Activated CD4-positive, alpha-beta memory T cell treated with anti-CD3 and anti-CD28 coated beads for 36 hours (primary cell): ENCODE measurements at regions of chr2 and their contacts with region 1.

Region 1: DNA sequence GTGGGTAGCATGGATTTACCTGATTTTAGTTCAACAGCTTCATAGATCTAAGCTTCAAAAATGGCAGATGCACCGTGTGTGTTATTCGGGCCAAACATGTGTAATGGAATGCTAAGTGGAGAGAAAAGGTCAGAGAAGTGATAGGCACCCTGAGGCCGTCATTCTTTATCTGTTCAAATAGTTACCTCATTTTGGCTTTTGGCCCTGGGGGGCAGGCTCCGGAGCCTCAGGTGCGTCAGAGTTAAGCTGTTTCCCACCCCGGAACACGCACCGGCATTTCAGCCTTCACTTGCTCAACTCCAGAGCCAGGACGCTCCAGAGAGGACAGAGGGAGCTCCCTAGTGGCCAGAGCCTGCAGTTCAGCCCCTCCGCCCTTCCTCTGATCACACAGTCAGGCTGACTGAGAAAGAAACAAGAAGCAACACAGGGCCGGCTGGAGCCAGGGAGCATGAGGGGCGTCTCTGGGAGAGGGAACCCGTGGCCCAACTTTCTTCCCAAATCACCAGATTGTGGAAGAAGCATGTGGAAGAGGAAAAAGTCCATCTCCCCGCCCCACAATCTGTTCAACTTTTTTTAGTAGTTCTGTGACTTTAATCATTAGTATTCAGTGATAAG is 135.2 kb upstream of the EPC2 start:
- DNase-seq: peak; percentile 95
- H3K4me3 Mint-ChIP-seq: peak overlapping the region; percentile 66
- H3K27ac Mint-ChIP-seq: peak overlapping the region; percentile 55
- H3K4me1 Mint-ChIP-seq: peaks cover 18% of the 10 kb centered on the region
- H3K27me3 Mint-ChIP-seq: no peaks in the 10 kb centered on the region

Region 2: GRCh38 chr2:147829106-147829505 is 680.3 kb before region 1 on chr2:
- CTCF ChIA-PET with region 1: no interaction called
- POLR2A ChIA-PET with region 1: no interaction called
- intact Hi-C with region 1: no loop called
- DNase-seq: no peak
- H3K4me3 Mint-ChIP-seq: no peak overlapping the region
- H3K27ac Mint-ChIP-seq: no peak overlapping the region
- H3K4me1 Mint-ChIP-seq: no peaks in the 10 kb centered on the region
- H3K27me3 Mint-ChIP-seq: no peaks in the 10 kb centered on the region

Region 3: DNA sequence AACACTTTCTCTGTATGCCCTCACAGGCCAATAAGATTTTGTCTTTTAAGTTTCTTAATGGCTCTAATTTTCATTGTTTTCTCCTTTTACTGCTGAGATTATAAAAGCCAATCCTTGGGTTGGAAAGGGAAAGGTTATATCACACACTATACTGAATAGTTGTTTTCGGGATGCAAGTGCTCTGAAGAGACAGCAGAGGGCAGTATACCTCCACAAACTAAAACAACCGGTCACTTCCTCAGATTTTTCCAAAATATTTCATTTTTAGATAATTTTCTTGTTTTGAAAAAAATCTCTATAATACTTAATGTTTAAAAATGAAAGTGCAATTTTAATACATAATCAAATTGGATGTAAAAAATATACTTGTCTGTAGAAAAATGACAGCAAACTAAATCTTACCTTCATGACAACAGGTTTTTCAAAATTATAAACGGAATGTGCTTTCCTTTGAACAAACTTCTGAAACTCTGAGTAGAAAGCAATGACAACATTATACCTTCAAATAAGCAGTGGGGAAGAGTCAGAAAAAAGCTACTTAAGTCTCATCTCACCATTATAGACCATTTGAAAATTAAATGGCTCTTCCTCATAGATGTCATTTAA is 571.5 kb before region 1 on chr2:
- CTCF ChIA-PET with region 1: interaction called, 33 read pairs
- POLR2A ChIA-PET with region 1: no interaction called
- intact Hi-C with region 1: loop called (anchors 1 kb)
- DNase-seq: no peak
- H3K4me3 Mint-ChIP-seq: no peak overlapping the region
- H3K27ac Mint-ChIP-seq: no peak overlapping the region
- H3K4me1 Mint-ChIP-seq: no peaks in the 10 kb centered on the region
- H3K27me3 Mint-ChIP-seq: no peaks in the 10 kb centered on the region

Region 4: GRCh38 chr2:147989809-147990403 is 519.5 kb before region 1 on chr2:
- CTCF ChIA-PET with region 1: interaction called, 46 read pairs
- POLR2A ChIA-PET with region 1: no interaction called
- intact Hi-C with region 1: loop called (anchors 1 kb)
- DNase-seq: no peak
- H3K4me3 Mint-ChIP-seq: no peak overlapping the region
- H3K27ac Mint-ChIP-seq: no peak overlapping the region
- H3K4me1 Mint-ChIP-seq: peaks cover 3% of the 10 kb centered on the region
- H3K27me3 Mint-ChIP-seq: no peaks in the 10 kb centered on the region

Region 5: GRCh38 chr2:148020111-148021058 is 489.0 kb before region 1 on chr2 and contains the start of gene ORC4:
- CTCF ChIA-PET with region 1: interaction called, 9 read pairs
- POLR2A ChIA-PET with region 1: no interaction called
- intact Hi-C with region 1: loop called (anchors 1 kb)
- DNase-seq: peak; percentile 99
- H3K4me3 Mint-ChIP-seq: peak within 1 kb of the TSS; percentile 100
- H3K27ac Mint-ChIP-seq: peak within 1 kb of the TSS; percentile 97
- H3K4me1 Mint-ChIP-seq: peaks cover 39% of the 10 kb centered on the region
- H3K27me3 Mint-ChIP-seq: no peaks in the 10 kb centered on the region
- total RNA-seq, gene ORC4: 34.1 to 34.9 TPM

Region 6: DNA sequence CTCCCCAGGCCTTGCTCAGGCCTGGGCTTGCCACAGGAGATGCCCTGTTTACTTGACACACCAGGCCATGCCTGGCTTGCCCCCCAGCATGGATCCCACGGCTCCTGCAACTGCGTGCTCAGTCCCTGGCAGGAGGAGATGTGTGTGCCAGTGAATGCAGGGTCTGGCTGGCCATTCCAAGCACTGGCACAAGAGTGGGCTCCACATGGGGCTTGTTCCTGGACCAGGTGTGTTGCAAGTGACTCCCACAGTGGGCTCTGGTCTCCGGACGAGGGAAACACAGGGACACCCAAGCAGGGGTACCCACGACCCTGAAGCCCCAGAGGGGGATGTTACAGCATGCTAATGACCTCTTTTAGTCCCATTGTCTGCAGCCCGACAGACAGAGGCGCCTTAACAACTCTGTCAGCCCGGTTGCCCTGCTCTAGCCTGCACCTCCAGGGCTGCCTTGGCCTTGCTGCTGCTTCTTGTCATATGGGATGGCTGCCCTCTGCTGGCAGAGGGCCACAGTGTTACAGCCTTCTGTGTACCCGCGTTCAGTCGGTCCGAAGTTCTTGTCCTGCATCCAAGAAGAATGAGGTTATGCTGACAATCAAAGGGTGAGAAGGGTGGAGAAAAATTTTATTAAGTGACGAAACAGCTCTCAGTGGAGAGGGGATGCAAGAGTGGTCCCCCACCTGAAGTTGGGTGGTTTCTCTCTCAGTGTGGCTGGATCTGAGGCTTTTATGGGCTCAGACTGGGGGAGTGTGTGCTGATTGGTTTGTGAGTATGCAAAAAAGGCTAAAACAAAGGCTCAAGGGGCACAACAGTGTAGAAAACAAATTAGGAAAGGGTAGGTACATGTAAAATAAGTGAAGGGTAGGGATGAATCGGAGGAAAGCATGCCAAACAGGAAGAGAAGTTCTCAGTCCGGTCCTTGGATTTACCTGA is 308.1 kb before region 1 on chr2:
- CTCF ChIA-PET with region 1: interaction called, 3 read pairs
- POLR2A ChIA-PET with region 1: no interaction called
- intact Hi-C with region 1: loop called (anchors 5 kb)
- DNase-seq: peak; percentile 51
- H3K4me3 Mint-ChIP-seq: no peak overlapping the region
- H3K27ac Mint-ChIP-seq: no peak overlapping the region
- H3K4me1 Mint-ChIP-seq: no peaks in the 10 kb centered on the region
- H3K27me3 Mint-ChIP-seq: no peaks in the 10 kb centered on the region

Region 7: DNA sequence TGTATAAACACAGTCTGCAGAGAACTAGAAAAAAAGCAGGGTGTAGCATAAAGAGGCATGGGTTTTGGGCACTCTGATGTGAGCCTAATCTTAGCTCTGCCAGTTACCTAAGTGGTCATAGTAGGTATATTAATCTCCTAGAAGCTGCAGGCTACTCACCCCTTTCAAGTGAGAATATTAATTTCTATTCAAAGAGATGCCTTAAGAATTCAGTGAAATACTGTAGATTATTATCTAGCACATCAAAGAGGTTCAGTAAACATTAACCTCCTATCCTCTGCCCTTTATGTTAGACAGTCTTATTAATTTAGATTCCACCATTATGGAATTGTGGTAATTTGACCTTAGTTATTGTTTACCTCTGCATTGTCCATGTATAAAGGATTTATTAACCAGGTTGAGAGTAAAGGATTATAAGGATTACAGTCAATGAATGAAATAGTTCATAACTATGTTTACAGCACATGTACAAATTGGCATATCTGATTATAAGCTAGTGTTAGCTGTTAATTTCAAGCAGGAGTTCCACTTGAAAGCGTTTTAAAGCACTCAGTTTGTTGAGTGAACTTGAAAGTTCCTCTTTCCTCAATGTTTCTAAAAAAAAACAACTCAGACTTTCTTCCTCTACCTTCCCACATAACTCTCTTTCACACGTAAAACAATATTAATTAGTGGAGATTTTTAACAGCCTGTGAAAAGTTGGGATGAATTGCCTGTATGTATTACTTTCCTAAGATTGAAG is 15.4 kb before region 1 on chr2:
- CTCF ChIA-PET with region 1: interaction called, 27 read pairs
- POLR2A ChIA-PET with region 1: no interaction called
- intact Hi-C with region 1: no loop called
- DNase-seq: no peak
- H3K4me3 Mint-ChIP-seq: no peak overlapping the region
- H3K27ac Mint-ChIP-seq: no peak overlapping the region
- H3K4me1 Mint-ChIP-seq: no peaks in the 10 kb centered on the region
- H3K27me3 Mint-ChIP-seq: no peaks in the 10 kb centered on the region

Region 8: GRCh38 chr2:148552675-148553331 is 43.4 kb after region 1 on chr2:
- CTCF ChIA-PET with region 1: interaction called, 11 read pairs
- POLR2A ChIA-PET with region 1: interaction called, 4 read pairs
- intact Hi-C with region 1: no loop called
- DNase-seq: peak; percentile 36
- H3K4me3 Mint-ChIP-seq: no peak overlapping the region
- H3K27ac Mint-ChIP-seq: no peak overlapping the region
- H3K4me1 Mint-ChIP-seq: peaks cover 4% of the 10 kb centered on the region
- H3K27me3 Mint-ChIP-seq: no peaks in the 10 kb centered on the region